ENCODE measurements at regions of chr17 and their contacts with region 1.

Region 1: GRCh38 chr17:40615295-40615988 is 32.2 kb downstream of the SMARCE1 start:
- DNase-seq: peak; percentile 63
- H3K4me3 ChIP-seq: no peak overlapping the region
- H3K27ac ChIP-seq: no peak overlapping the region
- H3K4me1 ChIP-seq: peaks cover 13% of the 10 kb centered on the region
- H3K27me3 ChIP-seq: no peaks in the 10 kb centered on the region
- CTCF ChIP-seq: peak; percentile 40

Region 2: DNA sequence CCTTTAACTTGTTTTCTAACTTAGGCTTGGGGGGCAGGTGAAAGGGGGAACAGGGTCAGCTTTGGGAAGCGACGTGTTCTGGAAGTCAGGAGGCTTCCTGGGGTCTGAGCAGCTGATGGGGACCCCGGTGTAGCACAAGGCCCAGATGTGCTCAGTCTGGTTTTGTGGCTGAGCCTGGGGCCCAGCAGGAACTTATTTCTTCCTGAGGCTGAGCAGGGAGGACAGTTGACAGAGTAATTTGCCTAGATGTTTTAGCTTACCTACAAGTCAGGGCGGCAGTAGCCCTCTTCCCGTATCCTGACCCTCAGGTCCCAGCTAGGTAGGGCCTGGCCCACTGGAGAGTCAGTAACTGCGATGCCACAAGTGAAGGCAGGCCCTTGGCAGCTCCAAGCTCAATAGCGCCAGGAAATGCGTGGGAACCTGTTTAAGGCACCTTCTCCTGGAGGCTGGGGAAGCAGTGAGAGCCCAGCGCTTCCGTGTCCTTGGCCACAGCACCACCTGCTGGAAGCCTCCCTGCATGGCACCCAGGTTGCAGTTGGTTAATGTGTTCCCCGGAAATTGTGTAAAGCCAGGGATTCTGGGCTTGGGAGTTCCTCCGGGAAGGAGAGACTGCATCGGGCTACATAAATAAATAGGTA is 55.4 kb before region 1 on chr17:
- intact Hi-C with region 1: no loop called
- DNase-seq: peak; percentile 95
- H3K4me3 ChIP-seq: peak overlapping the region; percentile 20
- H3K27ac ChIP-seq: peak overlapping the region; percentile 51
- H3K4me1 ChIP-seq: peaks cover 9% of the 10 kb centered on the region
- H3K27me3 ChIP-seq: no peaks in the 10 kb centered on the region
- CTCF ChIP-seq: peak; percentile 97

Region 3: DNA sequence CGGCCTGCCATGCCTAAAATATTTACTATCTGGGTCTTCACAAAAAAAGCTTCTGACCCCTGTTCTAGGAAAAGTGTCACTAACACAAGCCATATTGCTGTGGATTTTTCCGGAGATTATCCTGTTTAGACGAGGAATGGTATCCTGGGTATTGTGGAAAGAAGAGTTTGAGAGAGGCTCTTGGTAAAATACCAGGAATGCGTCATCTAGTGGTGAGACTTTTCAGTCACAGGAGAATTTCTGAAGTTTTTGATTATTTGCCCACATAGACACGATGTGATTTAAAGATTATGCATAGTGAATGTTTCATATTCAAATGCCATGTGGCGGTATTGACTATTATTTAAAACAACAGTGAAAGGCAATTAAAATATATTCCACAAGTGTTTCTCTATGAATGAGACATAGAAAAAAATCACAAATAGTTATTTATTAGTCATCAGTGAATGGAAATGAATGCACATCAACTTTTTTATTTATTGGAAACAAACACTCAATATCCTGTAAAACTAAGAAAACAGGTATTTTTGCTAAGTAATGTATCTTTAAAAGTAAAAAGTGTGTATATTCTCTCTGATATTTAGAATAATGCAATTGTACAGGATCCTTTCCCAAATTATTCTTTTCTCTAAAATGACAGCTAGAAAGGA is 176.5 kb after region 1 on chr17:
- intact Hi-C with region 1: loop called (anchors 5 kb)
- DNase-seq: no peak
- H3K4me3 ChIP-seq: no peak overlapping the region
- H3K27ac ChIP-seq: no peak overlapping the region
- H3K4me1 ChIP-seq: no peaks in the 10 kb centered on the region
- H3K27me3 ChIP-seq: no peaks in the 10 kb centered on the region
- CTCF ChIP-seq: peak; percentile 25

Measured in colonic mucosa (tissue), 4 donors.